Activated CD4-positive, alpha-beta T cell treated with anti-CD3 and anti-CD28 coated beads, Interleukin-2, amount 10 ng/mL, durations not matched to agents 7 days and 5 days (primary cell): ENCODE measurements at regions of chr12 and their contacts with region 1.

Region 1: DNA sequence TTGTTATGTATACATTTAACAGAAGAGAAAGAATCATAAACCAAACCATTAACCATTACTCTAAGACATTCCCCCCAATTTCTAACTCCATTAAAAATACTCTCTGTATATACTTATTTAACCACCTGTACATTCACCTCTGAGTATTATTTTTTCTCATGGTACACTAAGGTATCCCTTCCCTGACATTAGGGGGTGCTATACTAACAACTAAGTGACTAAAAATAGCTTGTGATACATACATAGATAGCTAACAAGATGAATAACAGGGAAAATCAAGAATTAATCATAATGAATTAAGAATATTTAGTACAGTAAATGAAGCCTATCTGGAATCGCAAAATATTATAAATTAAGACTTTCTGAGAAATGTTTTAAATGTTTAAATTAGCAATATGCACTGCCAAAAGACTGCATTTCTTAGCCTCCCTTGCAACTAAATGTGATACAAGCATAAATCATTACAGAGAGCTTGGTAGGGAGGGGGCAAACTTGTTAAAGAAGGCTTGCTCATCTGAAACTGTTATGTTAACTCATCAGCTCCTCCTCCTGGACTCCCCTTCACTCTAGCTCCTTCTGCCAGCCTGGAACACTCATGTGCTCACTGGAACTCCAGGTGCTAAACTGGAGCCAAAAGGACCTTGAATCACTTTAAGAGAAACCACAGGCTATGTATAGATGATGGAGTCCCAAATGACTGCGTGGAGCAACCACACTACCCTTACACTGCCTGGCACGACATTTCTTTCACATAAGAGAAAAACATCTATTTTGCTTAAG is 14.9 kb downstream of the C2CD5 start:
- DNase-seq: no peak
- H3K4me3 Mint-ChIP-seq: no peak overlapping the region
- H3K27ac Mint-ChIP-seq: no peak overlapping the region
- H3K4me1 Mint-ChIP-seq: peaks cover 6% of the 10 kb centered on the region
- H3K27me3 Mint-ChIP-seq: no peaks in the 10 kb centered on the region

Region 2: DNA sequence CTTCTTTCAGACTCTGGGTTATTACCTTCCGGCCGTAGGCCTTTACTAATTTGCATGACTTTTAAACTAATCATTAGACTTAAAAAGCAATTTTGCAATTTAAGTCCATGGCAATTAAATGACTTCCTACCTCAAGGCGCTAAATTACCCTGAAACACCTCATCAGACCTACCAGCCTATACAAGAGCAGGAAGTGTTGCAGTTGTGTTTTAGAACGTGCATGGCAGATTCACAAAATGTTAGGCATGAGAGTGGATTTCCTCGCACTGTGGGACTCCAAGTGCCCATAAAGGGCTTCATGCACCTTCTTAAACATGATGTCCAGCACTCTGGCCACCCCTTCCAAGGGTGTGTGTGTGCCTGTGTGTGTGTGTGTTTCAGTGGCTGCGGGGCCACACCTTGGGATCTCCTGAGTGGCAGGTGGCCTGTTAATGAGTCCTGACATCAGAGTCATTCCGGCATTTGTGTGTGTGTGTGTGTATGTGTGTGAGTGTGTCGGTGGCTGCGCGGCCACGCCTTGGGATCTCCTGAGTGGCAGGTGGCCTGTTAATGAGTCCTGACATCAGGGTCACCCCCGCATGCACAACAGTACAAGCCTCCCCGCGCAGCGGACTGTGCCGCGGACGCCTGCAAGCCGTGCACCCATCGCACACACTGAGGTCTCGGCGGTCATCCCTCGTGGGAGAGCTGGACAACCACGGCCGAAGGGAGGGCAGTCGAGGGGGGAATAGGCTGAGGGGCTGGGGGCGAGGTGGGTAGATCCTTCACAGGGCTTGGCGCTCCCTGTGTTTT is 14.0 kb after region 1 on chr12:
- CTCF ChIA-PET with region 1: interaction called, 13 read pairs
- POLR2A ChIA-PET with region 1: no interaction called
- DNase-seq: peak; percentile 63
- H3K4me3 Mint-ChIP-seq: peak overlapping the region; percentile 85
- H3K27ac Mint-ChIP-seq: peak overlapping the region; percentile 93
- H3K4me1 Mint-ChIP-seq: peaks cover 48% of the 10 kb centered on the region
- H3K27me3 Mint-ChIP-seq: peaks cover 10% of the 10 kb centered on the region

Region 3: DNA sequence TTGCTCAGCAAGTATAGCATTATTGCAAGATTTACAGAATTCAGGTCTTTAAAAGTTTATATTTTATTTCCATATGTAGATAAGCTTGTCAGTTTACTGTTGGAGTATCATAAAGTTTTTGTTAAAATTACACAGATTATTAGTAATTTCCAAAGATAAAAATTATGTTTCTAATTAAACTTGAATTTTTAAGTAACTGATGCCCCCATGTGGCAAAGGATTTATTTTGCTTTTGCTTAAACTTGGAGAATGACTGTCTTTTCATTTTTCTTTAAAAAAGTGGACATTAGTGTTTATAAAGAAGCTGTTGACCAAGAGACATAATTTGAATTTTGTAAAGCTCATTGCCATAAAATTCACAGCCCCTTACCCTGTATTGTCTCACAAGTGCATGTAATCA is 141.3 kb after region 1 on chr12:
- CTCF ChIA-PET with region 1: no interaction called
- POLR2A ChIA-PET with region 1: no interaction called
- DNase-seq: no peak
- H3K4me3 Mint-ChIP-seq: no peak overlapping the region
- H3K27ac Mint-ChIP-seq: no peak overlapping the region
- H3K4me1 Mint-ChIP-seq: no peaks in the 10 kb centered on the region
- H3K27me3 Mint-ChIP-seq: no peaks in the 10 kb centered on the region

Region 4: GRCh38 chr12:22828073-22828472 is 298.6 kb after region 1 on chr12:
- CTCF ChIA-PET with region 1: no interaction called
- POLR2A ChIA-PET with region 1: no interaction called
- DNase-seq: no peak
- H3K4me3 Mint-ChIP-seq: no peak overlapping the region
- H3K27ac Mint-ChIP-seq: no peak overlapping the region
- H3K4me1 Mint-ChIP-seq: no peaks in the 10 kb centered on the region
- H3K27me3 Mint-ChIP-seq: no peaks in the 10 kb centered on the region